CD4-positive, alpha-beta memory T cell (primary cell): ENCODE measurements at regions of chr13 and their contacts with region 1.

Region 1: GRCh38 chr13:24220086-24220703 is 59.7 kb downstream of the SPATA13 start:
- DNase-seq: peak; percentile 64 to 72 (median 67)
- H3K4me3 ChIP-seq: no peak overlapping the region
- H3K4me3 Mint-ChIP-seq: no peak overlapping the region
- H3K27ac ChIP-seq: no peak overlapping the region
- H3K27ac Mint-ChIP-seq: peak overlapping the region in 2 of 7 donors; percentile 17 to 61
- H3K4me1 ChIP-seq: peaks cover 16% of the 10 kb centered on the region
- H3K4me1 Mint-ChIP-seq: peaks cover 13 to 30% (median 19%) of the 10 kb centered on the region in 4 donors
- H3K27me3 ChIP-seq: no peaks in the 10 kb centered on the region
- H3K27me3 Mint-ChIP-seq: peaks cover 0 to 2% of the 10 kb centered on the region in 2 donors

Region 2: GRCh38 chr13:23411706-23412105 is 808.5 kb before region 1 on chr13:
- CTCF ChIA-PET with region 1: no interaction called
- POLR2A ChIA-PET with region 1: no interaction called
- intact Hi-C with region 1: loop called (anchors 10 kb)
- DNase-seq: no peak
- H3K4me3 ChIP-seq: no peak overlapping the region
- H3K4me3 Mint-ChIP-seq: no peak overlapping the region
- H3K27ac ChIP-seq: no peak overlapping the region
- H3K27ac Mint-ChIP-seq: no peak overlapping the region
- H3K4me1 ChIP-seq: no peaks in the 10 kb centered on the region
- H3K4me1 Mint-ChIP-seq: peaks cover 0 to 5% (median 1%) of the 10 kb centered on the region in 4 donors
- H3K27me3 ChIP-seq: no peaks in the 10 kb centered on the region
- H3K27me3 Mint-ChIP-seq: peaks cover 0 to 5% of the 10 kb centered on the region in 2 donors

Region 3: DNA sequence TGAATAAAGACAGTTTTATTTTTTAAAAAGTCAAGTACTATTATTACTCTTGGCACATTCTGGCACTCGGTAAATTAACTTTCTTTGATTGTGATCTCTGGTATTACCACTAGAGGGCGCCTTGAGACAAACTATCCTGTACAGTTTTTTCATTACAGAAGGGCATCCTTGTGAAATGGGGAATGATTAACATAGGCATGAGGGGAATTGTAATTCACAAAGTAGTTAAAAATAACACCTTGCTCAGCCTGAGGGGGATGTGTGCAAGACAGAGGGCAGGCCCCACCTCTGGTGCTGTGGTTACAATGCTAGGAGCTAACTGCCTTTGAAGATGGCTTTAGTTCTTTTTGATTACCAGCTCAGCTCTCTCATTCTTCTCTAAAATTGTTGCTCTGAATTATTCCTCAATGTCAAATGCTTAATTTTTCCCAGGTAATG is 298.7 kb before region 1 on chr13:
- CTCF ChIA-PET with region 1: interaction called, 5 read pairs
- POLR2A ChIA-PET with region 1: no interaction called
- intact Hi-C with region 1: loop called (anchors 1 kb)
- DNase-seq: peak in 4 of 5 donors; percentile 23 to 39 (median 26)
- H3K4me3 ChIP-seq: no peak overlapping the region
- H3K4me3 Mint-ChIP-seq: no peak overlapping the region
- H3K27ac ChIP-seq: no peak overlapping the region
- H3K27ac Mint-ChIP-seq: no peak overlapping the region
- H3K4me1 ChIP-seq: no peaks in the 10 kb centered on the region
- H3K4me1 Mint-ChIP-seq: no peaks in the 10 kb centered on the region
- H3K27me3 ChIP-seq: no peaks in the 10 kb centered on the region
- H3K27me3 Mint-ChIP-seq: peaks cover 7 to 26% of the 10 kb centered on the region in 2 donors

Region 4: GRCh38 chr13:24053519-24054251 is 166.5 kb before region 1 on chr13:
- CTCF ChIA-PET with region 1: interaction called, 92 read pairs
- POLR2A ChIA-PET with region 1: interaction called, 7 read pairs
- intact Hi-C with region 1: loop called (anchors 1 kb)
- DNase-seq: peak; percentile 51 to 63 (median 56)
- H3K4me3 ChIP-seq: no peak overlapping the region
- H3K4me3 Mint-ChIP-seq: no peak overlapping the region
- H3K27ac ChIP-seq: no peak overlapping the region
- H3K27ac Mint-ChIP-seq: peak overlapping the region in 2 of 7 donors; percentile 5 to 48
- H3K4me1 ChIP-seq: no peaks in the 10 kb centered on the region
- H3K4me1 Mint-ChIP-seq: peaks cover 2 to 9% (median 5%) of the 10 kb centered on the region in 4 donors
- H3K27me3 ChIP-seq: no peaks in the 10 kb centered on the region
- H3K27me3 Mint-ChIP-seq: peaks cover 6 to 23% of the 10 kb centered on the region in 2 donors

Region 5: GRCh38 chr13:24107955-24108614 is 112.1 kb before region 1 on chr13:
- CTCF ChIA-PET with region 1: no interaction called
- POLR2A ChIA-PET with region 1: no interaction called
- intact Hi-C with region 1: no loop called
- DNase-seq: no peak
- H3K4me3 ChIP-seq: no peak overlapping the region
- H3K4me3 Mint-ChIP-seq: no peak overlapping the region
- H3K27ac ChIP-seq: no peak overlapping the region
- H3K27ac Mint-ChIP-seq: no peak overlapping the region
- H3K4me1 ChIP-seq: no peaks in the 10 kb centered on the region
- H3K4me1 Mint-ChIP-seq: no peaks in the 10 kb centered on the region
- H3K27me3 ChIP-seq: no peaks in the 10 kb centered on the region
- H3K27me3 Mint-ChIP-seq: peaks cover 8 to 13% of the 10 kb centered on the region in 2 donors

Region 6: DNA sequence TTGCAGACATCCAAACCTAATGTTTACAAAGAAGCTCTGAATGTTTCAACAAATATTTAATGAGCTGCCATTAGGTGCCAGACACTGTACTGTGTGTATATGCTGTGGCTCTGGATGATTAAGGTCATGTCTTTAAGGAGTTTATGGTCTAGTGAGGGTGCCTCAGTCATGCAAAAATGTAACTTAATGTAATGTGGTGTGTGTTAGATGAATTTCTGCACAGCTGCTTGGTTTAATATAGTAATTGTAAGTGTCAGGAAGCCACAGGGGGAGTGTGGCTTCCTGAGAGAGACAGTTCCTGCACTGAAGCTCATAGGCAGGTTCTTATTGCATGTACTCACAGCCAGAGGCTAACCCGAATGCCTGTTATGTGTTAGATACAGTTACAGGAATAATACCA is 16.4 kb before region 1 on chr13:
- CTCF ChIA-PET with region 1: interaction called, 14 read pairs
- POLR2A ChIA-PET with region 1: no interaction called
- intact Hi-C with region 1: no loop called
- DNase-seq: no peak
- H3K4me3 ChIP-seq: no peak overlapping the region
- H3K4me3 Mint-ChIP-seq: peak overlapping the region in 4 of 8 donors; percentile 1 to 23 (median 12)
- H3K27ac ChIP-seq: no peak overlapping the region
- H3K27ac Mint-ChIP-seq: peak overlapping the region in 2 of 7 donors; percentile 1 to 8
- H3K4me1 ChIP-seq: peaks cover 7% of the 10 kb centered on the region
- H3K4me1 Mint-ChIP-seq: peaks cover 6 to 14% (median 11%) of the 10 kb centered on the region in 4 donors
- H3K27me3 ChIP-seq: no peaks in the 10 kb centered on the region
- H3K27me3 Mint-ChIP-seq: peaks cover 0 to 3% of the 10 kb centered on the region in 2 donors